CD4-positive, alpha-beta memory T cell (primary cell): ENCODE measurements at regions of chr19 and their contacts with region 1.

Region 1: DNA sequence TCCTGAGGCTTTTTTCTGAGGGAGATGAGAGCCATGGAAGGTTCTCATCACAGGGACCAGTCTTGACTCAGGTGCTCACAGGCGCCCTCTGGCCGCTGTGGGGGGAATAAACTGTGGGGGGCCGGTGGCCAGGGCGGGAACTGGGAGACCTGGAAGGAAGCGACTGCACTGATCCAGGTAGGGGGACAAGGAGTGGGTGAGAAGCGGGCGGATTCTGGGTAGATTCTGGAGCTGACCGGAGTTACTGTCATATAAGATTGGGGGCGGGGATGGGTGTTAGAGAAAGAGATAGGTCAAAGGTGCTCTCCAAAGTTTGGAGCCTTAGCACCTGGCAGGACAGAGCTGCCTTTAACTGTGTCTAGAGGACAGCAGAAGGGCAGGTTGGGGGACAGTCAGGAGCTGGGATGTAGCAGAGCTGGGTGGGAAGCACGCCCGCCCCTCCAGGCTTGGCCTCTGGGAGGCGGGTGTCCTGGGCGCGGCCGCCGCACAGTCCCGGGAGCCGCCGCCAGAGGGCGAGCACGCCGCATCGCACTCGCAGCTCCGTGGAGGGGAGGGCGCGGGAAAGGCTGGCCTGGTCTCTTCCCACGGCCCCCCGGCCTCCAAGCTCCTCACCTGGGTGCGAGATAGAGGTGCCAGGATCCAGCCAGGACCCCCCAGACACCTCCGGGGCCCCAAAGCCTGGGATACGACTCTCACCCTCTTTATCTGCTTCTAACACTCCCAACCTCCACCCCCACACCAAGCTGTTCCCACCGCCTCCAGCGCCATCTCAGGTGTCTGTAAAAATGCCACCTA is 4.2 kb upstream of the DAND5 start:
- DNase-seq: peak; percentile 74 to 83 (median 77)
- H3K4me3 ChIP-seq: peak overlapping the region; percentile 61 to 65
- H3K4me3 Mint-ChIP-seq: peak overlapping the region; percentile 87 to 96 (median 92)
- H3K27ac ChIP-seq: peak overlapping the region; percentile 50
- H3K27ac Mint-ChIP-seq: peak overlapping the region; percentile 38 to 92 (median 74)
- H3K4me1 ChIP-seq: peaks cover 4% of the 10 kb centered on the region
- H3K4me1 Mint-ChIP-seq: peaks cover 5 to 10% (median 6%) of the 10 kb centered on the region in 4 donors
- H3K27me3 ChIP-seq: no peaks in the 10 kb centered on the region
- H3K27me3 Mint-ChIP-seq: no peaks in the 10 kb centered on the region

Region 2: DNA sequence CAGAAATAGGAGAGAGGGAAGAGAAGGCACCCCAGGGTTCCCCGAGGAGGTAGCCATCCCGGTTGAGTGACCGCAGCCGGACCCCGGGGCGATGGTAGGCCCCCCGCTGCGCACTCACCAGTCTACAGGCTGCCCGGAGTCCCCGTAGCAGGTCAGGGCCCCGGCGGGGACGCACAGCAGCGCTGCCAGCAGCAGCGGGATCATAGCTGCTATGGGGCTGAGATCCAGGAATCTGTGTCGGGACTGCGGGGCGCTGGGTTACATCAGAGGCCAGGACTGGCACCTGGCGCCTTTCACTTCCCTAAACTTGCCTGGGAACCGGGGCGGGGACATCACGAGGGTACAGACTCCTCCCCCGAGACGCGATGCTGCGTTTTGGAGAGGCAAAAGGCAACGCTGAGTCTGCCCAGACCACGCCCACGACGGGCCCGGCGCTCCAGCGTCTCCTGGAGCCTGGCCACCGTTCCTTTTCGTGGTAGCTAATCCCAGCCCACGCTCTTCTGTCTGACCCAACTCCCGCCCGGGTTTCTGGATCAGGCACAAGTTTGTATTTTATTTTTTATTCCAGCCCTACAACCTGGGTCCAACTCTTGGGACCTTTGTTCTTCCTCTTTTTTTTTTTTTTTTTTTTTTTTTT is 83.9 kb before region 1 on chr19 and contains the start of gene DNASE2:
- CTCF ChIA-PET with region 1: interaction called, 166 read pairs
- POLR2A ChIA-PET with region 1: interaction called, 31 read pairs
- intact Hi-C with region 1: loop called (anchors 1 kb)
- DNase-seq: peak; percentile 80 to 91 (median 84)
- H3K4me3 ChIP-seq: peak within 1 kb of the TSS; percentile 73 to 76
- H3K4me3 Mint-ChIP-seq: peak within 1 kb of the TSS; percentile 88 to 92 (median 89)
- H3K27ac ChIP-seq: peak within 1 kb of the TSS; percentile 66
- H3K27ac Mint-ChIP-seq: peak within 1 kb of the TSS; percentile 85 to 96 (median 93)
- H3K4me1 ChIP-seq: peaks cover 29% of the 10 kb centered on the region
- H3K4me1 Mint-ChIP-seq: peaks cover 10 to 46% (median 23%) of the 10 kb centered on the region in 4 donors
- H3K27me3 ChIP-seq: no peaks in the 10 kb centered on the region
- H3K27me3 Mint-ChIP-seq: no peaks in the 10 kb centered on the region
- total RNA-seq, gene DNASE2: 31.6 to 32.8 TPM

Region 3: GRCh38 chr19:12913011-12913561 is 52.1 kb before region 1 on chr19:
- CTCF ChIA-PET with region 1: interaction called, 11 read pairs
- POLR2A ChIA-PET with region 1: no interaction called
- intact Hi-C with region 1: no loop called
- DNase-seq: no peak
- H3K4me3 ChIP-seq: no peak overlapping the region
- H3K4me3 Mint-ChIP-seq: peak overlapping the region in 2 of 8 donors; percentile 5 to 31
- H3K27ac ChIP-seq: no peak overlapping the region
- H3K27ac Mint-ChIP-seq: peak overlapping the region in 5 of 7 donors; percentile 3 to 98 (median 88)
- H3K4me1 ChIP-seq: peaks cover 21% of the 10 kb centered on the region
- H3K4me1 Mint-ChIP-seq: peaks cover 9 to 29% (median 18%) of the 10 kb centered on the region in 4 donors
- H3K27me3 ChIP-seq: no peaks in the 10 kb centered on the region
- H3K27me3 Mint-ChIP-seq: no peaks in the 10 kb centered on the region

Region 4: DNA sequence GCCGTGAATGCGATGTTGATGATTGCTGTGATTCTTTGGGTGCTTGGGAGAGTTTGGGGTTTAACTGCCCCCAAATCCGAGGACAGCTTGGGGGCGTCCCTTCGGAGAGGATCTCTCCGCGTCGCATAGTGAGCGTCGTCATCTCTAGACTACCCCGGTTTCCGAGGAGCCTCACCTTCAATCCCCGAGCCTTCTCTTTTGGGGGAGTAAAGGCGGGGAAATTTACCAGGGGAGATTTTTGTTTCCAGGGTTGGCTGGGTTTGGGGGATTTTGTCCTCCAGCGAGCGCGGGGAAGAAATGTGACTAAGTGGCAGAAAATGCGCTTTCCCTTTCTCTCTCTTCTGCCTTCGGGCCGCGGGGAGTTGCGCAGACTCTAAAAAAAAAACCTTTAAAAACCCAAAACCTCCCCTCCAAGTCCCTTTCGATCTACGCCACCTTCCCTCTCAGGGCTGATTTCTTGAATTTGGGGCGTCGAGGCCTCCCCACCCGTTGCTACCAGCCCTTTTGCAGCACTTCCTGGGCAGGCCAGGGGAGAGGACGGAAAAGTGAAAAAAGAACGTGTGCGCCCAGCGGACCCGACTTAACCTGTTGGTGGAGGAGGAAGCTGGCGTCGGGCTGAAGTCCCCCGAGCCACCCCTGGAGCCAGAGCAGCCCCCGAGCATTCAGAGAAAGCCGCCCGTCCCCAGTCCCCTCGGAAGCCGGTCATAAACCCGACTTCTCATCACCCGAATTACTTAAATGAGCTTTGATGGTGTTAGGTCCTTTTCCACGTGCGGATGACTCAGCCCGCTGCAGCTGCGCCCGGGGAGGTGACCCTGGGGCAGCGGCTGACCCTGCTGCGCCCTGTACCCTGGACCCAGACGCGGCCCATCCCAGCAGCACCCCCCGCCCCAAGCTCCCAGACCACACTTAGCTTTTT is 47.7 kb after region 1 on chr19:
- CTCF ChIA-PET with region 1: interaction called, 10 read pairs
- POLR2A ChIA-PET with region 1: no interaction called
- intact Hi-C with region 1: no loop called
- DNase-seq: peak in 4 of 5 donors; percentile 19 to 35 (median 33)
- H3K4me3 ChIP-seq: peak overlapping the region; percentile 37 to 39
- H3K4me3 Mint-ChIP-seq: peak overlapping the region; percentile 81 to 92 (median 86)
- H3K27ac ChIP-seq: no peak overlapping the region
- H3K27ac Mint-ChIP-seq: peak overlapping the region in 5 of 7 donors; percentile 20 to 83 (median 75)
- H3K4me1 ChIP-seq: peaks cover 26% of the 10 kb centered on the region
- H3K4me1 Mint-ChIP-seq: peaks cover 8 to 34% (median 21%) of the 10 kb centered on the region in 4 donors
- H3K27me3 ChIP-seq: peaks cover 42% of the 10 kb centered on the region
- H3K27me3 Mint-ChIP-seq: peaks cover 56 to 62% of the 10 kb centered on the region in 2 donors

Region 5: GRCh38 chr19:13093407-13094105 is 128.3 kb after region 1 on chr19:
- CTCF ChIA-PET with region 1: interaction called, 31 read pairs
- POLR2A ChIA-PET with region 1: interaction called, 3 read pairs
- intact Hi-C with region 1: no loop called
- DNase-seq: peak; percentile 76 to 82 (median 78)
- H3K4me3 ChIP-seq: no peak overlapping the region
- H3K4me3 Mint-ChIP-seq: peak overlapping the region in 2 of 8 donors; percentile 33 to 64
- H3K27ac ChIP-seq: no peak overlapping the region
- H3K27ac Mint-ChIP-seq: peak overlapping the region in 4 of 7 donors; percentile 24 to 68 (median 36)
- H3K4me1 ChIP-seq: peaks cover 38% of the 10 kb centered on the region
- H3K4me1 Mint-ChIP-seq: peaks cover 11 to 37% (median 18%) of the 10 kb centered on the region in 4 donors
- H3K27me3 ChIP-seq: peaks cover 15% of the 10 kb centered on the region
- H3K27me3 Mint-ChIP-seq: peaks cover 5 to 9% of the 10 kb centered on the region in 2 donors